ENCODE measurements at regions of chr12 and their contacts with region 1.

Region 1: GRCh38 chr12:54140588-54141388 is 48.0 kb downstream of the SMUG1 start:
- DNase-seq: peak; percentile 86

Region 2: GRCh38 chr12:54040148-54040494 is 100.7 kb before region 1 on chr12:
- intact Hi-C with region 1: no loop called
- DNase-seq: no peak

Region 3: DNA sequence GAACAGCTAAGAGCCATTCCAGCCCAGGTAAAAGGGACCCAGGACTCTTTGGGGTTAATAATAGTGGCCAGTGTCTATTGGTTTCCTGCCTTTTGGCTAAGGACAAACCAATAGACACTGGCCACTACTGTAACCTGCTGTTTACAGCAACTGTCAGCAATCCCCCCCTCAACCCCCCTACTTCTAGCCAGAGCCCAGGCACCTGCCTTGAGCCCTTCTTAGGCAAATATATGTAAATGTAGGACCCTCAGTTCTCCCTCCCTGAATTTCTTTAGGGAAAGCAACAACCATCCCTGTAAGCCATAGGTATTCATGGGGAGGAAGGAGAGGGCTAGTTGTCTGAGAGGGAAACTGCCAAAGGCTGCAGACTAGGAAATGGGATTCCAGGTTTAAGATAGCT is 64.8 kb before region 1 on chr12:
- intact Hi-C with region 1: loop called in 1 of 2 experiments (anchors 10 kb)
- DNase-seq: no peak

Region 4: DNA sequence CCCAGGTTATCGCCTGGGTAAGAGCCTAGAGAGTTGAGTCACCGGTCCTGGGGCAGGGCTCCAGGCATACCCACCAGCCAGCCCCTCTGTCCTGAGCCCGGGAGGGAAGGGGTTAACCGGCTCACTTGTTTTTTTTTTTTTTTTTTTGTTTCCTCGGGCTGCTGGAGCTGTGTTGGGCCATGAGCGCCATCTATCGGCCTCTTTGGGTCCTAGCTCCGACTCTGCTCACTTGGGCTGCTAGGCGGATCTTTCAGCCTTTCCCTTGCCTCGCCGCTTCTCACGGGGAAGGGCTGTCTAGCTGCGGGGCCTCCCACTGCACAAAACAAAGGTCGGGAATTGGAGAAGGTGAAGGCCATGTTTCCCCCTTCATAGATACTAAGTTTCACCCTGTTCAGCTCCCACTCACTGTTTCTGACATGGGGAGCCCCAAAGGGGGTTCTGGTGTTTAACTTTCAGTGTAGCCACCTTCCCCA is 50.8 kb after region 1 on chr12:
- intact Hi-C with region 1: loop called in 1 of 2 experiments (anchors 5 kb)
- DNase-seq: peak; percentile 93